AG04450 (cell line): ENCODE measurements at regions of chr6 and their contacts with region 1.

Region 1: DNA sequence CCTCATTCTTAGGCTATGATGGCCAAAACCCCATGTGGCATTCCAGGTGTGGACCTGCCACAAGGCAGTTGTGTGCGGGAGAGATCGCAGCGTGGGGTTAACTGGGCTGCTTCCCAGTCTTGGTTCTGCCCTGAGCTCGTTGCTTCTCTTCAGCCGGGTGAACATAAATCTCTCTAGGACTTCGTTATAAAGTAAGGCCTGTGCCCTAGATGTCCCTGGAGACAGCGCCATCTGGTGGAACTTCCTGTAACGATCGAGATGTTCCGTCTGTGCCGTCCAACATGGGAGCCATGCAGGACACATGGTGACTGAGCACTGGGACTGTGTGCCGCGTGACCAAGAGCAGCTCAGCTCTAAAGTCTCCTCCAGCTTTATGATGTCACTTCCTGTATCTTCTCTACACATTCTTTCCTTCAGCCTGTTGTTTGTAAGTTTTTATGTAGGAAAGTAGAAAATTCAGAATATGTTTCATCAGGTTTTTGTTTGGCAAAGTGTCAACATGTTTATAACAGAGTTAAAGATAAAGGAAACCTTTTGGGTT is 26.8 kb upstream of the RPP40 start:
- DNase-seq: no peak
- H3K4me3 ChIP-seq: no peak overlapping the region
- H3K27ac ChIP-seq: no peak overlapping the region
- H3K27me3 ChIP-seq: no peaks in the 10 kb centered on the region
- CTCF ChIP-seq: peak; percentile 66

Region 2: GRCh38 chr6:5012519-5012918 is 18.1 kb before region 1 on chr6:
- CTCF ChIA-PET with region 1: interaction called, 11 read pairs
- POLR2A ChIA-PET with region 1: no interaction called
- DNase-seq: no peak
- H3K4me3 ChIP-seq: no peak overlapping the region
- H3K27ac ChIP-seq: no peak overlapping the region
- H3K27me3 ChIP-seq: no peaks in the 10 kb centered on the region
- CTCF ChIP-seq: no peak

Region 3: DNA sequence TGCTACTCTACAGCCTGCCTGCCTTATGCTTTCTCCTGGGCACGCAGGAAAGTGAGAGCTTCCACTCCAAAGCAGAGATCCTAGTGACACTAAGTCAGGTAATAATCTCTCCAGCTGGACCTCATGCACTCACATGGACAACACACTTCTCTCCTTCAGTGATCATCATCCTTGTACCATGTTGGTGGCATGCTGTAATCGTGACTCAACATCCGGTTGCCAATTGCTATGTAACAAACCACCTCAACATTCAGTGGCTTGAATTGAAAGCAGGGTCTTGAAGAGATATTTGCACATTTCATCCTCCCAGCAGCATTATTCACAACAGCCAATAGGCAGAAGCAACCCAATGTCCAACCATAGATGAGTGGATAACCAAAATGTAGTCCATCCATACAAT is 14.2 kb after region 1 on chr6:
- CTCF ChIA-PET with region 1: interaction called, 20 read pairs
- POLR2A ChIA-PET with region 1: no interaction called
- DNase-seq: no peak
- H3K4me3 ChIP-seq: no peak overlapping the region
- H3K27ac ChIP-seq: no peak overlapping the region
- H3K27me3 ChIP-seq: peaks cover 3% of the 10 kb centered on the region
- CTCF ChIP-seq: no peak